ENCODE measurements at regions of chr4 and their contacts with region 1.

Region 1: GRCh38 chr4:112726031-112726430 is 89.1 kb downstream of the LARP7 start:
- DNase-seq: no peak
- ATAC-seq: peak; percentile 76 to 83 (median 82)
- H3K4me3 ChIP-seq: peak overlapping the region; percentile 24
- H3K27ac ChIP-seq: peak overlapping the region; percentile 20
- H3K4me1 ChIP-seq: peaks cover 6% of the 10 kb centered on the region
- H3K27me3 ChIP-seq: no peaks in the 10 kb centered on the region
- CTCF ChIP-seq: no peak

Region 2: DNA sequence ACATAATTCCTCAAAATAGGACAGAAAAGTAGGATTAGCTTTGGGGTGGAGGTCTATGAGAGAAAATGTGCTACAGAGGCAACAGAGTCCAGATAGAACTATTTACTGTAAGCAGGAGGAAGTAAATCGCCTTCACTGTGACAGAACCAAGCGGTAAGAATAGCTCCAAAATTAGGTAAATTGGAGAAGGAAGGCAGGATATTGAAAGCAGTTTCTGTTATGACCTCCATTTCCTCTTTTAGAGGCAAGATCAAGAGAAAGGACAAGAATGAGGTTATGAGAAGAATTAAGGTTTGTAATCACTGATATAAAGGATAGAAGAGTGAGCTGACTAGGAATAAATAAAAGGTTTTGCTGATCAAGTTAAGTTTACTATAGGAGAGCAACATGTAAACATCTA is 165.9 kb before region 1 on chr4:
- intact Hi-C with region 1: no loop called
- DNase-seq: no peak
- ATAC-seq: no peak
- H3K4me3 ChIP-seq: no peak overlapping the region
- H3K27ac ChIP-seq: no peak overlapping the region
- H3K4me1 ChIP-seq: no peaks in the 10 kb centered on the region
- H3K27me3 ChIP-seq: no peaks in the 10 kb centered on the region
- CTCF ChIP-seq: no peak

Region 3: GRCh38 chr4:112604589-112604988 is 121.4 kb before region 1 on chr4:
- intact Hi-C with region 1: no loop called
- DNase-seq: no peak
- ATAC-seq: peak in 3 of 4 donors; percentile 51 to 64 (median 59)
- H3K4me3 ChIP-seq: no peak overlapping the region
- H3K27ac ChIP-seq: no peak overlapping the region
- H3K4me1 ChIP-seq: no peaks in the 10 kb centered on the region
- H3K27me3 ChIP-seq: no peaks in the 10 kb centered on the region
- CTCF ChIP-seq: peak; percentile 52

Region 4: GRCh38 chr4:112664611-112665010 is 61.4 kb before region 1 on chr4:
- intact Hi-C with region 1: no loop called
- DNase-seq: no peak
- ATAC-seq: no peak
- H3K4me3 ChIP-seq: no peak overlapping the region
- H3K27ac ChIP-seq: no peak overlapping the region
- H3K4me1 ChIP-seq: no peaks in the 10 kb centered on the region
- H3K27me3 ChIP-seq: no peaks in the 10 kb centered on the region
- CTCF ChIP-seq: no peak

Region 5: DNA sequence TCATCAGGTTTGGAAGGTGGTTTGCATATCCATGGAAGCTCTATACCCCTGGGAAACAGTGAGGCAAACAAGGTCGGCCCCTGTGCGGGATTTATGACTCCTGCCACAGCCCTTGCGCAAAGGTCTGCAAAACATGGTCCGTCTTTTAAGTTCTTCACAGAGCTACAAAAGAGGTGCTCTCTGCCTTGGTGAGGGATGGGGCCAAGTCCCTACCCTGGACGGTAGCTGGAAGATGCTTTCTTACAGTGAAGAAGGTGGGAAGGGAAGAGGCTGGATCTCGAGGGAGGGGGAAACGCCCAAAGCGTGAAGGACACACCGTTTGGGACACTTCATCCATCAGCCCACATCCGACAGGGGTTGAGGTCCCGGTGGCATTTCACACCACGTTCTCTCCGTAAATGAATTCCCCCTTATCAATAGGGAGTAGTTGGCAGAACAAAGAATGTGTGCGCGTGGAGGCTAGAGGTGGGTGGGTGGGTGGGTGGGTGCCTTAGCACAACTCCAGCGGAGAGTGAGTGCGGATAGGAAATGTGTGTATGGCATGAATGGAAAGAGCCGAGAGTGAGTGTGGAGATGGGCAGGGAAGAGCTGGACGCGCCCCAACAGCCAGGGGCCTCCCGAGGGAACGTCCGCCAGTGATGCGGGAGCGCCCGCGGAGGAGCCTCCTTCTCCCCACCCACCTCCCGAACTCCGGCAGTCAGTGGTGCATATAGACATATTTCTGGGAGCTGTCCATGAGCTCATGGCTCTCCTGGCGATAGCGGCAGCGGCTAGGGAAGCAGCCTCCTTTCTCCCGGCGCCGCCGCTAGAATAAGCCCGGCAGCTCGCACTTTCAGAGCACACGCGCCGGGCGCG is 20.8 kb before region 1 on chr4:
- intact Hi-C with region 1: no loop called
- DNase-seq: peak; percentile 24 to 68
- ATAC-seq: peak; percentile 72 to 83 (median 75)
- H3K4me3 ChIP-seq: peak overlapping the region; percentile 77
- H3K27ac ChIP-seq: peak overlapping the region; percentile 33
- H3K4me1 ChIP-seq: no peaks in the 10 kb centered on the region
- H3K27me3 ChIP-seq: no peaks in the 10 kb centered on the region
- CTCF ChIP-seq: no peak

Region 6: GRCh38 chr4:113256946-113257345 is 530.9 kb after region 1 on chr4:
- intact Hi-C with region 1: loop called in 1 of 2 experiments (anchors 10 kb)
- DNase-seq: no peak
- ATAC-seq: no peak
- H3K4me3 ChIP-seq: no peak overlapping the region
- H3K27ac ChIP-seq: no peak overlapping the region
- H3K4me1 ChIP-seq: no peaks in the 10 kb centered on the region
- H3K27me3 ChIP-seq: no peaks in the 10 kb centered on the region
- CTCF ChIP-seq: no peak

Measured in psoas muscle (tissue), 8 donors.